MCF 10A (cell line): ENCODE measurements at regions of chr1 and their contacts with region 1.

Region 1: DNA sequence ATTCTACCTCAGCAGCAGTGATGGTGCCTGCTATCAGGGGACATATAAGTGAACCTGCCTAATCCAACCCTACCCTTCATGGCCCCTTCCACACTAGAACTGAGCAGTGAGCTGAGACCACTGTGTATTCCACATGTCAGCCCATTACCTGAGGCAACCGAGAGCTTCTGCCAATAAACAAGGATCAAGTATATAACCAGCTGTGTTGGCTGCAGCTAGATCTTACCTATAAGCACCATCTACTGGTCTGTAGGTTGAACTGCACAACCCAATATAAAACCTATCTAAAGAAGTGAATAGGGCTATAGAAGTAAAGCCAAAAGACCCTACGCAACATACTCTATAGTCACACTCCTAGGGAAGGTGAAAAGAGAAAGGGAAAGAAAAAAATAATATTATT is 376.9 kb downstream of the HHIPL2 start:
- DNase-seq: peak; percentile 67
- H3K4me3 Mint-ChIP-seq: no peak overlapping the region
- H3K27ac Mint-ChIP-seq: no peak overlapping the region
- H3K4me1 Mint-ChIP-seq: peaks cover 16% of the 10 kb centered on the region
- H3K27me3 Mint-ChIP-seq: no peaks in the 10 kb centered on the region
- CTCF ChIP-seq: peak; percentile 86

Region 2: DNA sequence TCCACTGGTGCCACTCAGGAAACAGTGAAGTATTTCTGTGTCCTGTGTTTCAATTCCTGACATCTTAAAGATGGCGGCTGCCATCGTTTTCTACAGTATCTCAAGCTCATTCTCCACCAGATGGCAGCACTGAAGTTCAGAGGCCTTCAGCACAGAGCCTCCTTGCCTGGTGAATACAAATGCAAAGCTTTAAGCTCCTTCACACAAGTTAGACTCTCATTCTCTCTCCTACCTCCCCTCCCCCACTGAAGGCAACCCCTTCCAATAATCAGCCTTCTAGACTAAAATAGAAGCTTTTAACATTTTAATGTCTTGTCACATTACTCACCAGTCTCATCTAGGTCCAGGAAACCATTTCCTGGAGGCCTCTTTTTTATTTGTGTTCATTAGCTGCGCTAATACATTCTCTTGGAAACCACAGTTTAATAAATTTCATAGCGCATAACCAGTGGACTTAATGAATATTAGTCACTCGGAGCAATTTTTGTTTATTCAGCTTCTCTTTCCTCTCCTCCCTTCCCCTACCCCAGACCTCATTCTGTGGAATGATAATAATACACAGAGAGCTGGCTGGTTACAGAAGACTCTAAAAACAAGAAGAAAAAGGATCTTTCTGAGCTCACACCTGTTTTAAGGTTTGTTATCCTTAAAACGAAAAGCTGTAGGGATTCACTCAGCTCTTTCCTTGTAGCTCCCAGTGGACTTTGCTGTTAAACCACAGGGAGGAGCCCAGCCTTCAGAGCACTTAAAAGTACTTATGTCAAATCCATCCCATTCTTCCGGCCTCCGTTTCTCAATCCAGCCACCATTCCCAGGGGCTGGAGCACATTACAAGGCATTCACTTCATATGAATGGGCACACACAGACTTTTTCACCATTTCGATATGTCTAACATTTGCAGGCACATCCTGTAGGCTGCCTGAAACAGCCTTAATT is 906.9 kb before region 1 on chr1:
- CTCF ChIA-PET with region 1: interaction called, 3 read pairs
- POLR2A ChIA-PET with region 1: no interaction called
- intact Hi-C with region 1: loop called (anchors 10 kb)
- DNase-seq: peak; percentile 93
- H3K4me3 Mint-ChIP-seq: no peak overlapping the region
- H3K27ac Mint-ChIP-seq: peak overlapping the region; percentile 42
- H3K4me1 Mint-ChIP-seq: peaks cover 5% of the 10 kb centered on the region
- H3K27me3 Mint-ChIP-seq: no peaks in the 10 kb centered on the region
- CTCF ChIP-seq: peak; percentile 72

Region 3: DNA sequence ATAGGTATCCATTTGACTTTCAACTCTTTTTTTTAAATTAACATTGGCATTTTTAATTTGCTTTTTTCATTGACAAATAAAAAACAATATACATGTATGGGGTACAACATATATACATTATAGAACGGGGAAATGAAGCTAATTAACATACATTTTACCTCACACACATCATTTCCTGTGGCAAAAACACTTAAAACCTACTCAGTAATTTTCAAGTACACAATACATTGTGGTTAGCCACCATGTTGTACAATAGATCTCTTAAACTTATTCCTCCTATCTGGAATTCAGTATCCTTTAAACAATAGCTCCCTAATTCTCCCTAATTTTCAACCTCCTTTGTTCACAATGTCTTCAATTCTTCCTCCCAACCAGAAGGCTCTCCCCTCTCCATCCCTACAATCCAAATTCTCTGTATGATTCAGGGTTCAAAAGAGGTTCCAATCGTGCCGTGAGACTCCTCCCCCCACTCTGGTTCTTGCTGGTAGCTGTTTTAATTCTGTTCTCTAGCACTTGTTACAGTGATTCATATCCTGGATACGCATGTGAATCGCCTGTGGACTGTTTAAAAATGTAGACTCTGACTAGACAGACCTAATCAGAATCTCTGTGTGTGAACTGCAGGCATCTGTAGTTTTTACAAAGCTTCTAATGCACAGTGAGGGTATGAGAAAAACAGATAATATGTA is 341.5 kb before region 1 on chr1:
- CTCF ChIA-PET with region 1: interaction called, 4 read pairs
- POLR2A ChIA-PET with region 1: no interaction called
- intact Hi-C with region 1: loop called (anchors 5 kb)
- DNase-seq: peak; percentile 96
- H3K4me3 Mint-ChIP-seq: peak overlapping the region; percentile 5
- H3K27ac Mint-ChIP-seq: peak overlapping the region; percentile 79
- H3K4me1 Mint-ChIP-seq: peaks cover 69% of the 10 kb centered on the region
- H3K27me3 Mint-ChIP-seq: no peaks in the 10 kb centered on the region
- CTCF ChIP-seq: no peak

Region 4: GRCh38 chr1:221972262-221973239 is 198.5 kb before region 1 on chr1:
- CTCF ChIA-PET with region 1: no interaction called
- POLR2A ChIA-PET with region 1: no interaction called
- intact Hi-C with region 1: no loop called
- DNase-seq: no peak
- H3K4me3 Mint-ChIP-seq: no peak overlapping the region
- H3K27ac Mint-ChIP-seq: no peak overlapping the region
- H3K4me1 Mint-ChIP-seq: peaks cover 14% of the 10 kb centered on the region
- H3K27me3 Mint-ChIP-seq: no peaks in the 10 kb centered on the region
- CTCF ChIP-seq: no peak

Region 5: DNA sequence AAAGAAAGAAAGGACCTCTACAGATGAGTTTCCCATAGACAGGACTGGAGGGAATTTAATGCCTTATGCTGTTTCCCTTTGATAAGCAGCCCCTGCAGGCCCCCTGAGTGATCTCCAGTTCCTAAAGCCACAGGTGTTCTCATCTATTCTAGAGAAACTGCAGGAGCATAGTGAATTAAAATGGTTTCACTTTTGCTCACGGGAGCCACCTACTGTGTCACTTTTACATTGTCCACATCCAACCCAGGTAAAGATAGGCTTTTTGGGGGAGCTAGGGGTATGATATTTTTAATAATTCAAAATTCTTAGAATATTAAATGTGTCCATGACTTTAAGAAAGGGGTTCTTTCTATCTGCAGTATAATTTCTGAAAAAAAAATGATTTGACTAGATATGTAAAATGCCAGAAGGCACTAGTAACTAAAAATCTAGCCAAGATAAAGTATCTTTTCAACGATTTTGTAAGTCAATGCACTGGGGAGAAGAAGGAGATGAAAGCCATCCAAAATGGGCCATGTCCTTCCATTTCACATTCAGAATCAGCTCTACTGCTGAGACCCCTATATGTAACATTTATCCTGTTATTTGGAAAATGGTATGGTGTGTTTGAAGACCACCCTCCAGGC is 161.8 kb before region 1 on chr1:
- CTCF ChIA-PET with region 1: interaction called, 10 read pairs
- POLR2A ChIA-PET with region 1: no interaction called
- intact Hi-C with region 1: loop called (anchors 5 kb)
- DNase-seq: peak; percentile 77
- H3K4me3 Mint-ChIP-seq: no peak overlapping the region
- H3K27ac Mint-ChIP-seq: peak overlapping the region; percentile 24
- H3K4me1 Mint-ChIP-seq: no peaks in the 10 kb centered on the region
- H3K27me3 Mint-ChIP-seq: no peaks in the 10 kb centered on the region
- CTCF ChIP-seq: peak; percentile 86

Region 6: DNA sequence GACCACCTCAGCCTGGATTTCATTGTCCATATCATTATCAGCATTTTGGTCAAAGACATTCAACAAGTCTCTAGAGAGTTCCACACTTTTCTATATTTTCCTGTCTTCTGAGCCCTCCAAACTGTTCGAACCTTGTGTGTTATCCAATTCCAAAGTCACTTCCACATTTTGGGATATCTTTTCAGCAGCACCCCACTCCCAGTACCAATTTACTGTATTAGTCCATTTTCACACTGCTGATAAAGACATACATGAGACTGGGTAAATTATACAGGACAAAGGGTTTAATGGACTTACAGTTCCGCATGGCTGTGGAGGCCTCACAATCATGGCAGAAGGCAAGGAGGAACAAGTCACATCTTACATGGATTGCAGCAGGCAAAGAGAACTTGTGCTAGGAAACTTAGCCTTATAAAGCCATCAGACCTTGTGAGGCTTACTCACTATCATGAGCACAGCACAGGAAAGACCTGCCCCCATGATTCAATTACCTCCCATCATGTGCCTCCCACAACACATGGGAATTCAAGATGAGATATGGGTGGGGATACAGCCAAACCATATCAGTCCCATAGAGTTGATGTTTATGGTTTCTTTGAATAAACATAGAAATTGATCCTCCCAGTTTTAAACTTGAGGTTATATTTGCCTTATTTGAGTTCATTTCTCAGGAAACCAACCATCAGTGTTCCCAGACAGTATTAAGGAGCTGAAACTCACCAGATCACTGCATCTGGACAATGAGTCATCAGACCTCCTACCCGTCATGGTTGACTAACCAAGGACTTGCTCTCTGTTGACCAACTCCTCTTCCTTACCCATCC is 106.4 kb before region 1 on chr1:
- CTCF ChIA-PET with region 1: no interaction called
- POLR2A ChIA-PET with region 1: no interaction called
- intact Hi-C with region 1: no loop called
- DNase-seq: peak; percentile 47
- H3K4me3 Mint-ChIP-seq: no peak overlapping the region
- H3K27ac Mint-ChIP-seq: no peak overlapping the region
- H3K4me1 Mint-ChIP-seq: no peaks in the 10 kb centered on the region
- H3K27me3 Mint-ChIP-seq: no peaks in the 10 kb centered on the region
- CTCF ChIP-seq: no peak

Region 7: DNA sequence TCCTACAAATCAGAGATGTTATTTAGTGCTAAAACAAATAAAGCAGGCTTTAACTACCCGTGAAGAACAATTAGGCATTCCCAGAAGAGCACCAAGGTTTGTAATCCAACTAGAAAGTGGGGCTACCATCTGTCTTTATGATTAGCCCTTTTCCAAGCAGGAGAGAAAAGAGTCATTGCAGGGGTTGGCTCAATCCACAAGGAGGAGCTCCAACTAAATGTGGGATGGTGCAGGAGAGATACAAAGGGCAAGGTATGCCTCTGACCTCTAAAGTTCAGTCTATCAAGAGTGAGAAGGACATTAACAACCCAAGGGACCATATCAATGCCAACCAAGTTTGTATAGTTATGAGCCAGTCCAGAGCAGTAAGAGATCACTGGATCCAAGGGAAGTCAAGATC is 46.4 kb before region 1 on chr1:
- CTCF ChIA-PET with region 1: interaction called, 8 read pairs
- POLR2A ChIA-PET with region 1: interaction called, 3 read pairs
- intact Hi-C with region 1: loop called (anchors 1 kb)
- DNase-seq: peak; percentile 64
- H3K4me3 Mint-ChIP-seq: no peak overlapping the region
- H3K27ac Mint-ChIP-seq: no peak overlapping the region
- H3K4me1 Mint-ChIP-seq: no peaks in the 10 kb centered on the region
- H3K27me3 Mint-ChIP-seq: no peaks in the 10 kb centered on the region
- CTCF ChIP-seq: peak; percentile 58